GM10248 (cell line): ENCODE measurements at regions of chr2 and their contacts with region 1.

Region 1: DNA sequence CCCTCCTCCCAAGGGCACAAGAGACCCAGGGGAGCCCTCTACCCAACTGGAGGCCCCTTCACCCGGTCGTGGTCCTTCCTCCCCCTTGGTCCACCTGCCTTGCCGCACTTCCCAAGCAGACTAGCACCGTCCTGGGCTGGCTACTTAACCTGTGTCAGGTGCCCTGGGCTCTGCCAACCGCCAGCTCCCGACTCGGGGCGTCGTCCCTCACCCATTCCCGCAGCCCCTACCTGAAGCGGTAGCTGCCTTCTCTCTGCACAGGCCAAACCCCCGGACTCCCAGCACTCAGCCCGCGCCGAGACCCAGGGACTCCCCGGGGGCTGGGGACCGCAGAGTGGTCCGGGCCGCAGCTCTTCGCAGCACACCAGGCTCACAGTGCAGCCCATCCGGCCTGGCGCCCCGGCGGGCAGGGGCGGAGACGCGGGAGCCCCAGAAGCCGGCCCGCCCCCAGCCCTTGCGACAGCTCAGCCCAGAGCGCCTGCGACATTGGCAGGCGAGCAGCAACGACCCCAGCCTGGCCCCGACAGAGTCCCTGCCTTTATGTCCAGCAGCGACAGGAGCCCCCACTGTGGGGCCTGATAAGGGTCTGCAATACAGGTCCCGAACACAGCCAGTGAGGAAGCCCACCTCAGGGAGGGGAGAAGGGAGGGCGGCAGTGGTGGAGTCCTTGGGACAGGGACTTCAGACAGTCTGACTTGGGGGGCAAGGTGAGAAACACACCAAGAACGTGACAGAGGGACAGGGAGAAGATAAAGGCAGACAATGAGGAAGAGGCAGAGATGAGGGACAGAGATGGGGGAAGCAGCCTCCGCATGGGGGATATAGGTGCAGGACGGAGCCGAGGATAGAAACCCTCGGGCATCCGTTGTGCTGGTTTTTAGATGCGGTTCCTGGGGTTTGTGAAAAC is 31.0 kb upstream of the TNS1 start:
- DNase-seq: peak; percentile 18
- CTCF ChIP-seq: no peak

Region 2: DNA sequence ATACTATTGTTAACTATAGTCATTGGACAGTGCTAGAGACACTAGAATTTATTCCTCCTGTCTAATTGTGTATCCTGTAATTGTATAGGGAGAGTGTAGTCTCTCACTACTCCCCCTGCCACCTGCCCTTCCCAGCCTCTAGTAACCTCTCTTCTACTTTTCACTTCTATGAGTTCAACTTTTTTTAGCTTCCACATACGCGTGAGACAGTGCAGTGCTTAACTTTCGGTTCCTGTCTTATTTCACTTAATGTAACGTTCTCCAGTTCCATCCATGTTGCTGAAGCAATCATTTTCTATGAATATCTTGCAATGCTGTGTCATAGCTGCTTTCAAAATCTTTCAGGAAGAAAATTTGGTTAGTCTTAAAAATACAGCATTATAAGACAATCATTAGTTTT is 12.4 kb after region 1 on chr2:
- CTCF ChIA-PET with region 1: interaction called, 37 read pairs
- POLR2A ChIA-PET with region 1: no interaction called
- DNase-seq: no peak
- CTCF ChIP-seq: no peak